ENCODE measurements at regions of chr19 and their contacts with region 1.

Region 1: DNA sequence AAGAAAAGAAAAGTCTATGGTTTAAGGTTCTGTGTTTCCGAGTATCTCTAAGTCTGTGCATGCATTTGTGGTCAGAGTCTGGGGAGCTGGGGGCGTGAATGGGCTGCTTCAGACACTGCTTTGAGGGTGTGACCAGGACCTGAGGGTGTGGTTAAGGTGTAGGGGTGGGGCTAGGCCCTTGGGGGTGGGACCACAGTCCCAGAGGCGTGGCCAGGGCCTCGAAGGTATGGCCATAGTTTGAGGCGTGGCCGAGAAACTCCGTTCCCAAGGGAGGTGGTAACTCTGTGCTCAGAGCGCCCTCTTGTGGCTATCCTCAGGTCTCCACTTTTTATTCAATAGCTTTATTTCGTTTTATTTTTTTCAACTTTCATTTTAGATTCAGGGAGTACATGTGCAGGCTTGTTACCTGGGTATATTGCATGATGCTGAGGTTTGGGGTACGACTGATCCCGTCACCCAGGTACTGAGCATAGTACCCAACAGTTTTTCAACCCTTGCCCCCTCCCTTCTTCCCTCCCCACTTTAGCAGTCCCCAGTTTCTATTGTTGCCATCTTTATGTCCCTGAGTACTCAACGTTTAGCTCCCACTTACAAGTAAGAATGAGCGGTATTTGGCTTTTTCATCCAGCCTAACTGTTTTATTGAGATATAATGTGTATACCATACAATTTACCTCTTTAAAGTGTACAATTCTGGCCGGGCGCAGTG is 7.0 kb upstream of the CBLC start:
- DNase-seq: peak; percentile 94
- H3K4me3 ChIP-seq: no peak overlapping the region; a peak in 1 of 4 replicates
- H3K27ac ChIP-seq: no peak overlapping the region
- H3K4me1 ChIP-seq: peaks cover 0 to 6% of the 10 kb centered on the region in 2 experiments; a peak in 1 of 4 replicates
- H3K27me3 ChIP-seq: no peaks in the 10 kb centered on the region
- CTCF ChIP-seq: peak; percentile 87
- EP300 ChIP-seq: no peak
- RAD21 ChIP-seq: peak; percentile 94

Region 2: GRCh38 chr19:44689056-44689895 is 81.4 kb before region 1 on chr19:
- CTCF ChIA-PET with region 1: interaction called, 71 read pairs
- POLR2A ChIA-PET with region 1: no interaction called
- DNase-seq: peak; percentile 78
- H3K4me3 ChIP-seq: no peak overlapping the region; a peak in 1 of 4 replicates
- H3K27ac ChIP-seq: no peak overlapping the region
- H3K4me1 ChIP-seq: peaks cover 0 to 16% of the 10 kb centered on the region in 2 experiments; a peak in 3 of 4 replicates
- H3K27me3 ChIP-seq: no peaks in the 10 kb centered on the region
- CTCF ChIP-seq: peak; percentile 92
- EP300 ChIP-seq: no peak
- RAD21 ChIP-seq: peak; percentile 78

Region 3: GRCh38 chr19:44712864-44713515 is 57.7 kb before region 1 on chr19:
- CTCF ChIA-PET with region 1: interaction called, 598 read pairs
- POLR2A ChIA-PET with region 1: no interaction called
- DNase-seq: no peak
- H3K4me3 ChIP-seq: no peak overlapping the region
- H3K27ac ChIP-seq: no peak overlapping the region
- H3K4me1 ChIP-seq: no peaks in the 10 kb centered on the region
- H3K27me3 ChIP-seq: no peaks in the 10 kb centered on the region
- CTCF ChIP-seq: no peak
- EP300 ChIP-seq: no peak
- RAD21 ChIP-seq: no peak

Region 4: GRCh38 chr19:44752816-44753618 is 17.7 kb before region 1 on chr19:
- CTCF ChIA-PET with region 1: interaction called, 35 read pairs
- POLR2A ChIA-PET with region 1: no interaction called
- DNase-seq: peak; percentile 68
- H3K4me3 ChIP-seq: peak overlapping the region in 1 of 2 experiments; percentile 36; a peak in 1 of 4 replicates
- H3K27ac ChIP-seq: peak overlapping the region; percentile 64 to 70; a peak in 3 of 4 replicates
- H3K4me1 ChIP-seq: peaks cover 17 to 27% of the 10 kb centered on the region in 2 experiments; a peak in 3 of 4 replicates
- H3K27me3 ChIP-seq: no peaks in the 10 kb centered on the region
- CTCF ChIP-seq: no peak
- EP300 ChIP-seq: peak; percentile 55 to 90; a peak in 2 of 4 replicates
- RAD21 ChIP-seq: no peak

Region 5: DNA sequence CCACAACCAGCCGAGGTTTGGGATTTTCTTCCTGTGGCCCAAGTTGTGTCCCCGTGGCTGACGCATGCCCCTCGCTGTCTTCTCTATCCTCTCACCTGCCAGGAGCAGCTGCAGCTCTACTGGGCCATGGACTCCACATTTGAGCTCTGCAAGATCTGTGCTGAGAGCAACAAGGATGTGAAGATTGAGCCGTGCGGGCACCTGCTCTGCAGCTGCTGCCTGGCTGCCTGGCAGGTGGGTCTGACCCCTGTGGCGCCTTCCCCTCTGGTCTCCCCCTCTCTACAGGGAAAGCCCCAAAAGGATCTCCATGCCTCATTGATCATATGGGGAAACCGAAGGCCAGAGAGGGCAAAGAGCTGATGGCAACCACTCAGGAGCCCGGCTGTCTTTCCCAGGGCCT is 21.6 kb after region 1 on chr19:
- CTCF ChIA-PET with region 1: interaction called, 16 read pairs
- POLR2A ChIA-PET with region 1: no interaction called
- DNase-seq: no peak
- H3K4me3 ChIP-seq: no peak overlapping the region
- H3K27ac ChIP-seq: no peak overlapping the region
- H3K4me1 ChIP-seq: no peaks in the 10 kb centered on the region; a peak in 1 of 4 replicates
- H3K27me3 ChIP-seq: no peaks in the 10 kb centered on the region
- CTCF ChIP-seq: no peak
- EP300 ChIP-seq: no peak
- RAD21 ChIP-seq: no peak

Measured in SK-N-SH (cell line).